ENCODE measurements at regions of chr3 and their contacts with region 1.

Region 1: DNA sequence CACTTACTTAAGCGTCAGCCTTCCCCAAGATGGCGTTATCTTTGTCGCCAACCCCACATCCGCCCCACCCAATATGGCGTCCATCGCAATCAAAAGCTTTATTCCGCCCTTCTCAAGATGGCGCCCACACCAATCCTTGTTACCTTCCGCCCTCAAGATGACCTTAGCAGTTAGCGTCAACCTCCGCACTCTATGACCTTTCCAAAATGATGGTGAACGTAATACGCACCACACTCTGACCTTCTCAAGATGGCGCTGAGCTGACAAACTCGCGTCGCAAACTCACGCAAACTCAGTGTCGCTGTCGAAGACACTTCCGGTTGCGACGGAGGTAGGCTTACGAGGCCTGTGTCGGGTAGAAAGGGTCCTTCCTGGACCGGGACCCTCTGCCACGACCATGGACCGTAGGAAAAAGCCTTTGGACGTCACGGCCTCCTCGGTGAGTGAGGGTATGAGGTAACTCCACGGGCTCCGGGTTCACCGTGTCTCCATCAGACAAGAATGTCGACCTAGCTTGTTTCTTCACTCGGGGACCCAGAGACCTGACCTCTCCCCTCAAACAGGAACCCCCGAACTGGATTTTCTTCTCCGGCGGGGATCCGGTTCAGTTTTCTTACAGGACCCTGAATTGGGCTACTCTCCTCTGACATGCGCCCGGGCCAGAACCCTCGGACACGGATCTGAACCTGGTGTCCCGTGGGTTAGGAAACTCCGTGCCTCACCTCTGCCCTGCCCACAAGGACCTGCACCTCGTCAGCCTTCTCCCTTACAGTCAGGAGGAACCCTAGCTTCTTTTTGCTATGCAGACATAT is at the start of gene CCDC174:
- DNase-seq: peak; percentile 82 to 98 (median 96)
- ATAC-seq: peak; percentile 95
- H3K4me3 Mint-ChIP-seq: peak within 1 kb of the TSS; percentile 87 to 100 (median 94)
- H3K27ac Mint-ChIP-seq: peak within 1 kb of the TSS; percentile 95 to 100 (median 98)
- H3K4me1 Mint-ChIP-seq: peaks cover 19 to 60% (median 59%) of the 10 kb centered on the region in 4 donors
- H3K27me3 Mint-ChIP-seq: no peaks in the 10 kb centered on the region
- polyA plus RNA-seq, gene CCDC174: 16.6 to 26.2 (median 22.8) TPM

Region 2: DNA sequence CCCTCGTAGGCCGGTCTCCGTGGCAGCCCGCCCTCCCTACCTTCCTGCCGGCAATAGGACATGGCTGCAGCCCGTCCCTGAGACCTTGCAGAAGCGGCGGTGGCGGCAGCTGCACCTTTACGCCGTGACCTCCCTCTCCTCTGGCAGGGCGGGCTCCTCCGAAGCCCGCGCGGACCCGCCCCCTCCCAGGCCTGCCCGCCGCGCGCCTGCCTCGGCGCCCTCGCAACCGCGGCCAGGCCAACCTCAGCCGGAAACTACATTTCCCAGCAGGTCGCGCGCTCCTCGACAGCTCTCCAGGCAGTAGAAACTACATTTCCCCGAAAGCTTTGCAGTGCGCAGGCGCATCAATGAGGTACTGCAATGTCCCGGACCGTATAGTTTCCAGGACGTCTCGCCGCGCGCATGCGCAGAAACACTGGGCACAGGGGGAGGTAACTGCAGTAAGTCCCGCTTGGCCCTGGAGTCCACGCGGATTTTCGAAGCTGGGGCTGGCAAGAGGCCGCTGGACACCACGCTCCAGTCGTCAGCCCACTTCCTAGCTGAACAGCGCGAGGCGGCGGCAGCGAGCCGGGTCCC is 526.9 kb before region 1 on chr3 and contains the starts of genes CHCHD4 and TMEM43:
- POLR2A ChIA-PET with region 1: interaction called, 16 read pairs
- DNase-seq: peak; percentile 96 to 100 (median 98)
- ATAC-seq: peak; percentile 88 to 92
- H3K4me3 Mint-ChIP-seq: peak within 1 kb of the TSS; percentile 92 to 97 (median 95)
- H3K27ac Mint-ChIP-seq: peak within 1 kb of the TSS; percentile 87 to 98 (median 96)
- H3K4me1 Mint-ChIP-seq: peaks cover 37 to 76% (median 64%) of the 10 kb centered on the region in 4 donors
- H3K27me3 Mint-ChIP-seq: no peaks in the 10 kb centered on the region
- polyA plus RNA-seq, gene CHCHD4: 6.8 to 15.8 (median 11.5) TPM
- polyA plus RNA-seq, gene TMEM43: 45.6 to 65.0 (median 56.0) TPM

Region 3: GRCh38 chr3:14178247-14179113 is 473.2 kb before region 1 on chr3 and contains the starts of genes LSM3 and XPC:
- POLR2A ChIA-PET with region 1: interaction called, 26 read pairs
- DNase-seq: peak; percentile 97 to 100 (median 98)
- ATAC-seq: peak; percentile 85 to 88
- H3K4me3 Mint-ChIP-seq: peak within 1 kb of the TSS; percentile 88 to 100 (median 98)
- H3K27ac Mint-ChIP-seq: peak within 1 kb of the TSS; percentile 97 to 100 (median 100)
- H3K4me1 Mint-ChIP-seq: peaks cover 32 to 75% (median 74%) of the 10 kb centered on the region in 4 donors
- H3K27me3 Mint-ChIP-seq: no peaks in the 10 kb centered on the region
- polyA plus RNA-seq, gene LSM3: 20.8 to 26.5 (median 24.8) TPM
- polyA plus RNA-seq, gene XPC: 28.5 to 49.6 (median 49.4) TPM

Region 4: GRCh38 chr3:14587740-14588360 is 63.8 kb before region 1 on chr3:
- POLR2A ChIA-PET with region 1: no interaction called
- DNase-seq: peak in 1 of 10 donors; percentile 3
- ATAC-seq: no peak
- H3K4me3 Mint-ChIP-seq: no peak overlapping the region
- H3K27ac Mint-ChIP-seq: no peak overlapping the region
- H3K4me1 Mint-ChIP-seq: no peaks in the 10 kb centered on the region
- H3K27me3 Mint-ChIP-seq: peaks cover 13 to 68% (median 25%) of the 10 kb centered on the region in 5 donors

Region 5: GRCh38 chr3:14628406-14628805 is 23.2 kb before region 1 on chr3:
- POLR2A ChIA-PET with region 1: no interaction called
- DNase-seq: no peak
- ATAC-seq: no peak
- H3K4me3 Mint-ChIP-seq: no peak overlapping the region
- H3K27ac Mint-ChIP-seq: no peak overlapping the region
- H3K4me1 Mint-ChIP-seq: no peaks in the 10 kb centered on the region
- H3K27me3 Mint-ChIP-seq: peaks cover 0 to 14% (median 8%) of the 10 kb centered on the region in 5 donors

Region 6: GRCh38 chr3:14691239-14691638 is 39.6 kb after region 1 on chr3:
- POLR2A ChIA-PET with region 1: no interaction called
- DNase-seq: no peak
- ATAC-seq: no peak
- H3K4me3 Mint-ChIP-seq: no peak overlapping the region
- H3K27ac Mint-ChIP-seq: no peak overlapping the region
- H3K4me1 Mint-ChIP-seq: peaks cover 0 to 14% (median 0%) of the 10 kb centered on the region in 4 donors
- H3K27me3 Mint-ChIP-seq: no peaks in the 10 kb centered on the region

Region 7: GRCh38 chr3:14885292-14885691 is 233.6 kb after region 1 on chr3:
- POLR2A ChIA-PET with region 1: interaction called, 12 read pairs
- DNase-seq: peak in 6 of 10 donors; percentile 9 to 66 (median 20)
- ATAC-seq: peak; percentile 23 to 28
- H3K4me3 Mint-ChIP-seq: peak overlapping the region; percentile 56 to 79 (median 67)
- H3K27ac Mint-ChIP-seq: peak overlapping the region; percentile 12 to 94 (median 86)
- H3K4me1 Mint-ChIP-seq: peaks cover 39 to 63% (median 59%) of the 10 kb centered on the region in 4 donors
- H3K27me3 Mint-ChIP-seq: no peaks in the 10 kb centered on the region

Region 8: DNA sequence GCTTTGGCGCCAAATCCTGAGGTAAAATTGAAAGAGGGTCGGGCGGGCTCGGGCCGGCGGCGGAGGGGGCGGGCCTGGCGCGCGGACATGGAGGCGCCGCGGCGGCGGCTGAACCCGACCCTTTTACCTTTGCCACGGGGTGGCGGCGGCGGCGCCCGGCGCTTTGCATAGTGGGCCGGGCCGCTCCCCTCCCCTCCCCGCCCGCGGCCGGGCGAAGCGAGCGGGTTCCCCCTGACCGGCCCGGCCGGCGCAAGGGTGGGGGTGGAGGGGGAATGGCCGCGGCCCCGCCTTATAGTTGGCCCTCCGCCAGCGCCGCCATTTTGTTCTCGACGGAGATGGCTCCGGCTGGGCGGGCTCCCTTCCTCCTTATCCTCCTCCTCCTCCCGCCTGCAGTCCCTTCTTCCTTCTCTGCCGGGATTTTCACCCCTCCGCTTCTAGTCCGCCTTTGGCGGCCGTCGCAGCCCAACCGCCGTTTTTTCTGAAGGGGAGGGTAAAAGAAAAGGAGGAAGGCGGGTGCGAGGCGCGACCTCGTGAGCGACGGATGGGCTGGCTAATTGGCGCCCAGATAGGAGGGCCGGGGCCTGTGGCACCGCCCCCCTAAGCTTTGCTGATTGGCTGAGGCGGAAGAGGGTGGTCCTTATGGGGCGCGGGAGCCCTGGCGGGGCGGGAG is 296.4 kb after region 1 on chr3:
- POLR2A ChIA-PET with region 1: interaction called, 31 read pairs
- DNase-seq: peak; percentile 92 to 99 (median 96)
- ATAC-seq: peak; percentile 86 to 89
- H3K4me3 Mint-ChIP-seq: peak overlapping the region; percentile 93 to 100 (median 100)
- H3K27ac Mint-ChIP-seq: peak overlapping the region; percentile 99 to 100 (median 100)
- H3K4me1 Mint-ChIP-seq: peaks cover 25 to 71% (median 64%) of the 10 kb centered on the region in 4 donors
- H3K27me3 Mint-ChIP-seq: no peaks in the 10 kb centered on the region

Region 9: GRCh38 chr3:15098503-15099363 is 447.1 kb after region 1 on chr3 and contains the start of gene RBSN:
- POLR2A ChIA-PET with region 1: interaction called, 11 read pairs
- DNase-seq: peak; percentile 89 to 98 (median 95)
- ATAC-seq: peak; percentile 76 to 79
- H3K4me3 Mint-ChIP-seq: peak within 1 kb of the TSS; percentile 89 to 99 (median 94)
- H3K27ac Mint-ChIP-seq: peak within 1 kb of the TSS; percentile 87 to 98 (median 96)
- H3K4me1 Mint-ChIP-seq: peaks cover 14 to 38% (median 29%) of the 10 kb centered on the region in 4 donors
- H3K27me3 Mint-ChIP-seq: peaks cover 0 to 9% (median 2%) of the 10 kb centered on the region in 5 donors
- polyA plus RNA-seq, gene RBSN: 16.3 to 20.3 (median 18.9) TPM

Measured in naive thymus-derived CD8-positive, alpha-beta T cell (primary cell).